Activated CD4-positive, alpha-beta T cell treated with anti-CD3 and anti-CD28 coated beads for 36 hours (primary cell): ENCODE measurements at regions of chrX and their contacts with region 1.

Region 1: DNA sequence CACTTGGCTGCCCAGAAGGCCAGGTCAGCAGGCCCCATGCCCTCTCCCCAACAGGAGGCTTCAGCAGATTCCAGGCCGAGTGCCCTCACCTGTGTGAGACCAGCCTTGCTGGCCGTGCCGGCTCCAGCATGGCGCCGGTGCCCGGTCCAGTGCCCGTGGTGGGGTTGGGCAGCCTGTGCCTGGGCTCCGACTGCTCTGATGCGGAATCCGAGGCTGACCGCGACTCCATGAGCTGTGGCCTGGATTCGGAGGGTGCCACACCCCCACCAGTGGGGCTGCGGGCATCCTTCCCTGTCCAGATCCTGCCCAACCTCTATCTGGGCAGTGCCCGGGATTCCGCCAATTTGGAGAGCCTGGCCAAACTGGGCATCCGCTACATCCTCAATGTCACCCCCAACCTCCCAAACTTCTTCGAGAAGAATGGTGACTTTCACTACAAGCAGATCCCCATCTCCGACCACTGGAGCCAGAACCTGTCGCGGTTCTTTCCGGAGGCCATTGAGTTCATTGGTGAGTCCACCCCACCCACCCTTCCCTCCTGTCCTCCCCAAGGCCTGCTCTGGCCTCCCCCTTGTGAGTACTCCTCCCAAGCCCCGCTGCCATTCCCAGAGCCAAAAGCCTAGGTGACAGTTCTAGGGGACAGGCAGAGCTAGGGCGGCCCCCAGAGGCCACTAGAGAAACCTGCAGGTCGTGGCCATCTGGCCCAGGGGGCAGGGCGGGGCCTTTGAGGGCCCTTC is 2.3 kb downstream of the DUSP9 start:
- DNase-seq: peak; percentile 64
- ATAC-seq: peak; percentile 84
- H3K4me3 Mint-ChIP-seq: no peak overlapping the region
- H3K27ac Mint-ChIP-seq: no peak overlapping the region
- H3K4me1 Mint-ChIP-seq: no peaks in the 10 kb centered on the region
- H3K27me3 Mint-ChIP-seq: peaks cover 17% of the 10 kb centered on the region

Region 2: DNA sequence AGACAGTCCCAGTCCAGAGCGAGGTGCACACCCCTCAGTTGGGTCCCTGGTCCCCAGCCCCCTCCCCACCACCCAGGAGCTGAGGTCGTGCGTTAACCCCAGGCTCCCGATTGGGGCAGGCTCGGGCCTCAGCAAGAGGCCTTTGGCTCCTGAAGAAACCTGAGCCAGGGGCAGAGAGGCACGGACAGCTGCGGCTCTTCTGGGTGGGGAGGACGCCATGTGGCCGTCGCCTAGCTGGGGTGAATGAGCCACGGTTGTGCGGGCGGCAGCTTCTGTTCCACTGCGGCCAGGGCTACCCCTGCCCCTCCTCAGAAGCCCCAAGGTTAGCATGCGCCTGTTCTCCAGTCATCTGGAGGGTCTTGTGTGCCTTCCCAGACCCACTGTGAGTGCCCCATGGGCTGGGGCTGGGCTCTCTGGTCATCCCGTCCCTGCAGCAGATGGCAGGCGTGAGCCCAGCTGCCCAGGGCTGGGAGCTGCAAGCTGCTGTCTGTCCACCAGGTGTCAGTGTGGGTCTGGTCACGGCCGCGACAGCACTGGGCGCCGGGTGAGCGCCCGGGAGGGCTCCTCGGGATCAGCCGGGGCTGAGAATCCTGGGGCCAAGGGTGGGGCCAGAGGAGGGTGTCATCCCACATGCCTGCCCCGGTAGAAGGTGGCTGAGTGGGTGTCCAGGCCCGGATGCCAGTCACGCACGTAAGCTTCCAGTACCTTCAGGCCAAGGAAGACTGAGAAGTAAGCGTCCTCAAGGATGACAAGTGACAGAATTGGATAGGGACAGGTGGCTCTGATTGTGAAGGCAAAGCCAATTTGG is 110.0 kb before region 1 on chrX:
- CTCF ChIA-PET with region 1: interaction called, 7 read pairs
- POLR2A ChIA-PET with region 1: no interaction called
- intact Hi-C with region 1: loop called in 1 of 2 experiments (anchors 1 kb)
- DNase-seq: peak; percentile 73
- ATAC-seq: peak; percentile 93
- H3K4me3 Mint-ChIP-seq: no peak overlapping the region
- H3K27ac Mint-ChIP-seq: no peak overlapping the region
- H3K4me1 Mint-ChIP-seq: no peaks in the 10 kb centered on the region
- H3K27me3 Mint-ChIP-seq: peaks cover 2% of the 10 kb centered on the region

Region 3: GRCh38 chrX:153554519-153555167 is 94.7 kb before region 1 on chrX:
- CTCF ChIA-PET with region 1: interaction called, 7 read pairs
- POLR2A ChIA-PET with region 1: no interaction called
- intact Hi-C with region 1: loop called (anchors 1 to 5 kb)
- DNase-seq: peak; percentile 76
- ATAC-seq: peak; percentile 66
- H3K4me3 Mint-ChIP-seq: no peak overlapping the region
- H3K27ac Mint-ChIP-seq: no peak overlapping the region
- H3K4me1 Mint-ChIP-seq: no peaks in the 10 kb centered on the region
- H3K27me3 Mint-ChIP-seq: no peaks in the 10 kb centered on the region

Region 4: GRCh38 chrX:153609917-153610428 is 39.4 kb before region 1 on chrX:
- CTCF ChIA-PET with region 1: interaction called, 4 read pairs
- POLR2A ChIA-PET with region 1: interaction called, 3 read pairs
- intact Hi-C with region 1: loop called (anchors 2 to 5 kb)
- DNase-seq: peak; percentile 85
- ATAC-seq: peak; percentile 91
- H3K4me3 Mint-ChIP-seq: peak overlapping the region; percentile 62
- H3K27ac Mint-ChIP-seq: peak overlapping the region; percentile 73
- H3K4me1 Mint-ChIP-seq: peaks cover 13% of the 10 kb centered on the region
- H3K27me3 Mint-ChIP-seq: no peaks in the 10 kb centered on the region